Posterior cingulate gyrus (tissue), 11 donors: ENCODE measurements at regions of chr12 and their contacts with region 1.

Region 1: GRCh38 chr12:116009805-116010204 is 267.7 kb downstream of the MED13L start:
- DNase-seq: no peak

Region 2: GRCh38 chr12:116172224-116172849 is 162.5 kb after region 1 on chr12:
- intact Hi-C with region 1: no loop called
- DNase-seq: no peak

Region 3: DNA sequence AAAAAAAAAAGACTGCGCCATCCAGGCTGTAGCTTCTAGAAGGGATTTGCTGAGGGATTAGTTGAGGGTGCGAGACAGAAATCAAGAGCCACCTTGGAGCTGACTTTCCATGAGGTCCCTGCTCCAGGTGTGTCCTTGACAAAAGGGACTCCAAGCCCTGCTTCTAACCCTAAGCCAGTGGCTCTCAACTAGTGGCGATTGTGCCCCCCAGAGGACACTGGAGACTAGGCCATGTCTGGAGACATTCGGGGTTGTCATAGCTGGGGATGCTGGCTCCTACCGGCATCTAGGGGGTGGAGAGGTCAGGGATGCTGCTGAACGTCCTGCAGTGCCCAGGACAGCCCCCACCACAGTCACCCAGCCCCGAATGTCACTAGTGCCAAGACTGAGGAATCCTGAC is 687.5 kb after region 1 on chr12:
- intact Hi-C with region 1: loop called (anchors 5 kb)
- DNase-seq: peak in 4 of 10 donors; percentile 23 to 85 (median 28)